CD4-positive, alpha-beta memory T cell (primary cell): ENCODE measurements at regions of chr6 and their contacts with region 1.

Region 1: DNA sequence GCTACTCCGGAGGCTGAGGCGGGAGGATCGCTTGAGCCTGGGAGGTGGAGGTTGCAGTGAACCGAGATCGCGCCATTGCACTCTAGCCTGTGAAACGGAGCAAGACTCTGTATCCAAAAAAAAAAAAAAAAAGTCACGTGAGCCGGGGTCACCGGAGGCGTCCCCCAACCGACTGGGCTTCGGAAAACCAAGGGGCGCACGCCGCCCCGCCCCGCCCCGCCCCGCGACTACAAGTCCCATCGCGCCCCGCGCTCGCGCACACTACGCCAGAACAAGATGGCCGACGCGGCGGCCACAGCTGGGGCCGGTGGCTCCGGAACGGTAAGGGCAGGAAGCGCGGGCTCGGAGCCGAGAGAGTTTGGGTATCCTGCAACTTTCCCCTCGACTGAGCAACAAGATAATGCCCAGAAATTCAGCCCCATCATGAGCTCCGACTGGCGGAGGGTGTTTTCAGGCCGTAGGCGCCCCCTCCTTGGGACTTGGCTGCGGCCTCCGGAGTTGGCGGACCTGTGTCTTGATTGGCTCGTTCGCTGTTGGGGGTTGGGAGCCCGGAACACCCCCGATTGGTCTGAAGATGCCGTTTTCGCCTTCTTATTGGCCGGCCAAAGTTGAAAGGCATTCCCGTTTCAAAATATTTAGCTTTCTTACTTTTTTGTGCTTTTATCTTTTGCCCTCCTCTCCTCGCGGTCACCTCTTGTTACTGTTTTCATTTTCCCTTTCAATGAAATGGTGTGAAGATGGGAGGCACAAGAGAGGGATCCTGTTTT is at the start of gene TAF8:
- DNase-seq: peak; percentile 87 to 92 (median 88)
- H3K4me3 ChIP-seq: peak within 1 kb of the TSS; percentile 89 to 92
- H3K4me3 Mint-ChIP-seq: peak within 1 kb of the TSS; percentile 91 to 98 (median 96)
- H3K27ac ChIP-seq: peak within 1 kb of the TSS; percentile 77
- H3K27ac Mint-ChIP-seq: peak within 1 kb of the TSS; percentile 95 to 98 (median 97)
- H3K4me1 ChIP-seq: peaks cover 61% of the 10 kb centered on the region
- H3K4me1 Mint-ChIP-seq: peaks cover 18 to 78% (median 42%) of the 10 kb centered on the region in 4 donors
- H3K27me3 ChIP-seq: no peaks in the 10 kb centered on the region
- H3K27me3 Mint-ChIP-seq: no peaks in the 10 kb centered on the region
- total RNA-seq, gene TAF8: 39.1 to 40.9 TPM

Region 2: GRCh38 chr6:41895300-41896233 is 154.9 kb before region 1 on chr6 and contains the start of gene USP49:
- CTCF ChIA-PET with region 1: interaction called, 15 read pairs
- POLR2A ChIA-PET with region 1: interaction called, 24 read pairs
- intact Hi-C with region 1: loop called (anchors 2 kb)
- DNase-seq: peak; percentile 86 to 92 (median 88)
- H3K4me3 ChIP-seq: peak within 1 kb of the TSS; percentile 74 to 91
- H3K4me3 Mint-ChIP-seq: peak within 1 kb of the TSS in 2 of 8 donors; percentile 90 to 98
- H3K27ac ChIP-seq: peak within 1 kb of the TSS; percentile 77
- H3K27ac Mint-ChIP-seq: peak within 1 kb of the TSS in 6 of 7 donors; percentile 79 to 94 (median 90)
- H3K4me1 ChIP-seq: peaks cover 23% of the 10 kb centered on the region
- H3K4me1 Mint-ChIP-seq: peaks cover 9 to 12% (median 10%) of the 10 kb centered on the region in 4 donors
- H3K27me3 ChIP-seq: no peaks in the 10 kb centered on the region
- H3K27me3 Mint-ChIP-seq: no peaks in the 10 kb centered on the region
- total RNA-seq, gene USP49: 1.8 to 2.4 TPM

Region 3: DNA sequence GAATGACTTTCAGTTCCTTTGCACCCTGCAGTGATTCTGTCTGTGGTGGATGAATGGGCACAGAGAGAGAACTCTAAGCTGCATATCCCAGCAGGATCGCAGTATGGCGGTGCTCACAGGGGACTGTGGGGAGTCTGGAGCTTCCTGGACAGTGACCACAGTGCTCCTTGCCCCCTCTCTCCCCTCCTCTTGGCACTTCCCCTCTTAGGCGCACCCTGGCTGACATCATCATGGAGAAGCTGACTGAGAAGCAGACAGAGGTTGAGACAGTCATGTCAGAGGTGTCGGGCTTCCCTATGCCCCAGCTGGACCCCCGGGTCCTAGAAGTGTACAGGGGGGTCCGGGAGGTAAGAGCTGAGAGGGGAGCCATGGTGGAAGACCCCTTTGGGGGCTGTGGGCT is 120.5 kb before region 1 on chr6:
- CTCF ChIA-PET with region 1: interaction called, 169 read pairs
- POLR2A ChIA-PET with region 1: interaction called, 280 read pairs
- intact Hi-C with region 1: no loop called
- DNase-seq: no peak
- H3K4me3 ChIP-seq: no peak overlapping the region
- H3K4me3 Mint-ChIP-seq: no peak overlapping the region
- H3K27ac ChIP-seq: no peak overlapping the region
- H3K27ac Mint-ChIP-seq: peak overlapping the region in 3 of 7 donors; percentile 11 to 63 (median 35)
- H3K4me1 ChIP-seq: peaks cover 16% of the 10 kb centered on the region
- H3K4me1 Mint-ChIP-seq: peaks cover 21 to 32% (median 25%) of the 10 kb centered on the region in 4 donors
- H3K27me3 ChIP-seq: no peaks in the 10 kb centered on the region
- H3K27me3 Mint-ChIP-seq: no peaks in the 10 kb centered on the region

Region 4: DNA sequence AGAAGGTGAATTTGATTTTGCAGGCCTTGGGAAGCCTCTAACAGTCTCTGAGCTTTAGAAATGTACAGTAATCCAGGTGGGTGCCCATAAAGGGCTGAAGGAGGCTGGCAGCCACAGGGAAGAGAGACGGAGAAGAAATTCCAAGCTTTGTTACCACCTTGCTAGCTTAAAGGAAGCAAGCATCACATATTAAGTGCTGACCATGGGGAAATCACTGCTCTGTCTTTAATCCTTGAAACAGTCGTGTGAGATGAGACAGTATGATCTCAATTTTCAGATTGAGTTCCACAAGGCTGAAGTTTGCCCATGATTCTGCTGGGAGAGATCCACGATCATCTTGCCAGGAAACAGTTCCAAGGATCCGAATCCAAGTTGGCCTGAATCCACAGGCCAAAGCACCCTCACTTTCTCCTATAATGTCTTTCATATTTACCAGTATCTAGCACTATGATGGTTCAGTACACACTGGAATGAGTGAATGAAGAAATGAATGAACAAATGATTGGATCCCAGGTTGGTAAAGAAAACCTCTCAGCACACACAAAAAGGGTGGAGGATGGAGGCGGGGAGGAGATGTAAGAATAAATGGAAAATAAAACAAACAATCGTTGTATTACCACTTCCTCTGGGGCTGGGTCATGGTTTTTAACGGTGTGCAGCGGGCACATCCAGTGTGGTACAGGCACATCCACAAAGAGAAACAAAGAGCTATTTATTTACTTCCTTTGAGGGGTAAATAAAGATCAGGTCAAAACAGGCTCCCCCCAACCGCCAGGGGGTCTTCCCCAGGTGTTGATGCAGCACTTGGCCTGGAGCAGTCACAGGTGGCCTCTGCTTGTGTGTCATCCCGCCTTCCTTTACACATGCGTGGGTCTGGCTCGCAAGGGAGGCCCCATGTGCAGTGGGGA is 28.3 kb before region 1 on chr6:
- CTCF ChIA-PET with region 1: interaction called, 9 read pairs
- POLR2A ChIA-PET with region 1: interaction called, 27 read pairs
- intact Hi-C with region 1: no loop called
- DNase-seq: peak; percentile 73 to 93 (median 81)
- H3K4me3 ChIP-seq: peak overlapping the region in 1 of 2 donors; percentile 47
- H3K4me3 Mint-ChIP-seq: peak overlapping the region; percentile 75 to 92 (median 85)
- H3K27ac ChIP-seq: peak overlapping the region; percentile 65
- H3K27ac Mint-ChIP-seq: peak overlapping the region; percentile 91 to 98 (median 95)
- H3K4me1 ChIP-seq: peaks cover 83% of the 10 kb centered on the region
- H3K4me1 Mint-ChIP-seq: peaks cover 60 to 80% (median 66%) of the 10 kb centered on the region in 4 donors
- H3K27me3 ChIP-seq: no peaks in the 10 kb centered on the region
- H3K27me3 Mint-ChIP-seq: no peaks in the 10 kb centered on the region

Region 5: GRCh38 chr6:42104095-42104806 is 53.8 kb after region 1 on chr6:
- CTCF ChIA-PET with region 1: interaction called, 8 read pairs
- POLR2A ChIA-PET with region 1: interaction called, 10 read pairs
- intact Hi-C with region 1: loop called (anchors 1 kb)
- DNase-seq: peak; percentile 65 to 77 (median 73)
- H3K4me3 ChIP-seq: peak overlapping the region in 1 of 2 donors; percentile 53
- H3K4me3 Mint-ChIP-seq: peak overlapping the region; percentile 42 to 84 (median 70)
- H3K27ac ChIP-seq: no peak overlapping the region
- H3K27ac Mint-ChIP-seq: peak overlapping the region in 1 of 7 donors; percentile 42
- H3K4me1 ChIP-seq: peaks cover 6% of the 10 kb centered on the region
- H3K4me1 Mint-ChIP-seq: peaks cover 0 to 14% (median 6%) of the 10 kb centered on the region in 4 donors
- H3K27me3 ChIP-seq: no peaks in the 10 kb centered on the region
- H3K27me3 Mint-ChIP-seq: peaks cover 2 to 6% of the 10 kb centered on the region in 2 donors

Region 6: GRCh38 chr6:42197555-42198362 is 147.3 kb after region 1 on chr6:
- CTCF ChIA-PET with region 1: no interaction called
- POLR2A ChIA-PET with region 1: no interaction called
- intact Hi-C with region 1: no loop called
- DNase-seq: peak in 2 of 5 donors; percentile 10 to 55
- H3K4me3 ChIP-seq: no peak overlapping the region
- H3K4me3 Mint-ChIP-seq: no peak overlapping the region
- H3K27ac ChIP-seq: no peak overlapping the region
- H3K27ac Mint-ChIP-seq: no peak overlapping the region
- H3K4me1 ChIP-seq: no peaks in the 10 kb centered on the region
- H3K4me1 Mint-ChIP-seq: peaks cover 0 to 8% (median 0%) of the 10 kb centered on the region in 4 donors
- H3K27me3 ChIP-seq: no peaks in the 10 kb centered on the region
- H3K27me3 Mint-ChIP-seq: no peaks in the 10 kb centered on the region

Region 7: GRCh38 chr6:42978839-42979522 is 928.5 kb after region 1 on chr6 and contains the start of gene PEX6:
- CTCF ChIA-PET with region 1: no interaction called
- POLR2A ChIA-PET with region 1: no interaction called
- intact Hi-C with region 1: no loop called
- DNase-seq: peak; percentile 87 to 98 (median 92)
- H3K4me3 ChIP-seq: peak within 1 kb of the TSS; percentile 70 to 75
- H3K4me3 Mint-ChIP-seq: peak within 1 kb of the TSS; percentile 92 to 99 (median 96)
- H3K27ac ChIP-seq: peak within 1 kb of the TSS; percentile 77
- H3K27ac Mint-ChIP-seq: peak within 1 kb of the TSS; percentile 93 to 99 (median 98)
- H3K4me1 ChIP-seq: peaks cover 56% of the 10 kb centered on the region
- H3K4me1 Mint-ChIP-seq: peaks cover 30 to 63% (median 43%) of the 10 kb centered on the region in 4 donors
- H3K27me3 ChIP-seq: no peaks in the 10 kb centered on the region
- H3K27me3 Mint-ChIP-seq: no peaks in the 10 kb centered on the region
- total RNA-seq, gene PEX6: 38.9 to 40.5 TPM